ENCODE measurements at regions of chr1 and their contacts with region 1.

Region 1: GRCh38 chr1:68232354-68233148 is at the start of gene WLS:
- DNase-seq: peak; percentile 86

Region 2: GRCh38 chr1:68197891-68198290 is 34.7 kb before region 1 on chr1:
- CTCF ChIA-PET with region 1: no interaction called
- POLR2A ChIA-PET with region 1: interaction called, 11 read pairs
- DNase-seq: no peak

Region 3: DNA sequence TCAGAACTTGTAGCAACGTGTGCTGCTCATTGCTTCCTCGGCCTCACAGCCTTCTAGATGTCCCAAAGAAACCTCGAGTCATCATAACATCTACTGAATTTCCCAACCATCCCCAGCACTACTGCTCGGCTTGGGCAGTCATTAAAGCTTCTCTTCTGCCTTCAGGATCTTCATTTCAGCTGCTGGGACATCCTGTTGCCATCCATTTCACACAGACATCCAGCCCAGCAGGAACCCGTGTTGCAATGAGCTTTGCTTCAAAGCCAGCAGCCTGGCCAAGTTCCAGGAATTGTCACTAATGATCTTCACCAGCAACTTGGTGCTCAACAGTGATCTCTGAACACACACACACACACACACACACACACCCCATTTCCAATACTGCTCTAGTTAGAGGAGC is 18.7 kb before region 1 on chr1:
- CTCF ChIA-PET with region 1: no interaction called
- POLR2A ChIA-PET with region 1: interaction called, 14 read pairs
- DNase-seq: no peak

Region 4: GRCh38 chr1:68221621-68222373 is 10.8 kb before region 1 on chr1:
- CTCF ChIA-PET with region 1: interaction called, 3 read pairs
- POLR2A ChIA-PET with region 1: interaction called, 27 read pairs
- DNase-seq: no peak

Region 5: DNA sequence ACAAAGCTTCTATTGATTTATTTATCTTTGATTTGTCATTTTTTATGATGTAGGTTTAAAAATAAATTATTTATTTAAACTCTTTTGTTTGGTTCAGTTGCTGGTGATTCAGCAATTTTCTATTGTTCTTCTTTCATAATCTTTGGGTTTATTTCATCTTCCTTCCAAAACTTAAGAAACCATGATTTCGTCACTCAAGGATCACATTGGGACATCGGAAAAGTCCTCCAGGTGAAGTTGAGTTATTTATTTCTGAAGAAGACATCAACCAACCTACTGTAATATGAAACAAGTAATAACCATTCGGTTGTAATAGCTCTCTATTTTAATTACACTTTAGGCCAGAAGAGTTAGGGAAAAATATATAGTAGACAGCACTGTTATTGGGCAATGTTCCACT is 22.8 kb after region 1 on chr1:
- CTCF ChIA-PET with region 1: no interaction called
- POLR2A ChIA-PET with region 1: no interaction called
- DNase-seq: no peak

Region 6: DNA sequence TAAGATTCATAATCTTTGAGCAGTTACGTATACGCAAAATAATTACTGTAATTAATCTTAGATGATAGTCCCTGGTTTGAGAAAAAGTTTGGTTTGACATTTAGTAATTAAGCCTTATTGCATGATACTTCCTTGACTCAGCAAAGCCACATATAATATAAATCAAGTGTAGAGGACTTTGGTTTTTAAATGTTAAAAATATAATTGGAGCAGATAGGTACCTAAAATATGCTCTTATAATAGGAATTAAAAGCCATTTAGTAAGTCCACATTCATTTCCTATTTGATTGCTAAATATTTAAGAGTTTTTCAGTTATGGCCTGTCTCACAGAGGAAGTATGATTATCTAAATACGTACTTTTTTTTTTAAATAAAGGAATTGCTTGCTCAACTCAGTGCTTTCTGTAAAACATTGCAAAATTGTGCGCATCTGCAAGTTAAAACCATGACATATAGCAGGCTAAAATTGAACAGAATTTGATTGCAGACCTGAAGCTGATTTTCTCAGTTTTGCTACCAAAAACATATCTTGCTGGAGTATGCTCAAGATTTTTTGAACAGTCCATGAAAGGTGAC is 196.8 kb after region 1 on chr1:
- CTCF ChIA-PET with region 1: no interaction called
- POLR2A ChIA-PET with region 1: no interaction called
- DNase-seq: no peak